ENCODE measurements at regions of chr16 and their contacts with region 1.

Region 1: DNA sequence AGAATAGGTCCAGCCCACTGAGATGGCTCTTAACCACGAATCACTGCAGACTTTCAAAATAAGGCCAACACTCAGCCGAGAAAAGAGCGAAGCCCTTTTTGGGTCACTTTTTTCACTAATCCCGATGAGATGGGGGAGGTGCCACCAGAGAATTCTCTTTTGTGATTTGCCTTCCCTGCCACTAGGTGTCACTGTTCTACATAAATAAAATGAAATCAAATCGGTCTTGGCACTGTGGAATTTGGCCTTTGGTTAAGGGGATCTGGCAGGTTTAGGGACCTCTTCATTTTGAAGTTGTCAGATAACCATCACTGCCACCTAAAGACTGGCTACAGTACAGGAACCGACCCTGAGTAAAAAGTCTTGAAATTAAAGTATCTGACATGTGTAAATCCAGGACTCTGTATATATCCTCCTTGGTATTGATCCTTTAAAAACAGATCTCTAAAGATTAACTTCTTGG is 147.0 kb downstream of the HS3ST4 start:
- DNase-seq: no peak
- ATAC-seq: no peak
- H3K4me3 ChIP-seq: no peak overlapping the region
- H3K27ac ChIP-seq: no peak overlapping the region
- H3K4me1 ChIP-seq: no peaks in the 10 kb centered on the region
- H3K27me3 ChIP-seq: no peaks in the 10 kb centered on the region
- CTCF ChIP-seq: peak; percentile 9 to 60 (median 34)
- POLR2A ChIP-seq: no peak

Region 2: GRCh38 chr16:25785361-25785760 is 53.4 kb before region 1 on chr16:
- in situ Hi-C with region 1: no loop called
- intact Hi-C with region 1: loop called (anchors 10 kb)
- DNase-seq: no peak
- ATAC-seq: no peak
- H3K4me3 ChIP-seq: no peak overlapping the region
- H3K27ac ChIP-seq: no peak overlapping the region
- H3K4me1 ChIP-seq: no peaks in the 10 kb centered on the region
- H3K27me3 ChIP-seq: no peaks in the 10 kb centered on the region
- CTCF ChIP-seq: no peak
- POLR2A ChIP-seq: no peak

Region 3: GRCh38 chr16:25875956-25876598 is 37.3 kb after region 1 on chr16:
- in situ Hi-C with region 1: no loop called
- intact Hi-C with region 1: no loop called
- DNase-seq: no peak
- ATAC-seq: no peak
- H3K4me3 ChIP-seq: no peak overlapping the region
- H3K27ac ChIP-seq: no peak overlapping the region
- H3K4me1 ChIP-seq: no peaks in the 10 kb centered on the region
- H3K27me3 ChIP-seq: no peaks in the 10 kb centered on the region
- CTCF ChIP-seq: no peak
- POLR2A ChIP-seq: no peak

Region 4: DNA sequence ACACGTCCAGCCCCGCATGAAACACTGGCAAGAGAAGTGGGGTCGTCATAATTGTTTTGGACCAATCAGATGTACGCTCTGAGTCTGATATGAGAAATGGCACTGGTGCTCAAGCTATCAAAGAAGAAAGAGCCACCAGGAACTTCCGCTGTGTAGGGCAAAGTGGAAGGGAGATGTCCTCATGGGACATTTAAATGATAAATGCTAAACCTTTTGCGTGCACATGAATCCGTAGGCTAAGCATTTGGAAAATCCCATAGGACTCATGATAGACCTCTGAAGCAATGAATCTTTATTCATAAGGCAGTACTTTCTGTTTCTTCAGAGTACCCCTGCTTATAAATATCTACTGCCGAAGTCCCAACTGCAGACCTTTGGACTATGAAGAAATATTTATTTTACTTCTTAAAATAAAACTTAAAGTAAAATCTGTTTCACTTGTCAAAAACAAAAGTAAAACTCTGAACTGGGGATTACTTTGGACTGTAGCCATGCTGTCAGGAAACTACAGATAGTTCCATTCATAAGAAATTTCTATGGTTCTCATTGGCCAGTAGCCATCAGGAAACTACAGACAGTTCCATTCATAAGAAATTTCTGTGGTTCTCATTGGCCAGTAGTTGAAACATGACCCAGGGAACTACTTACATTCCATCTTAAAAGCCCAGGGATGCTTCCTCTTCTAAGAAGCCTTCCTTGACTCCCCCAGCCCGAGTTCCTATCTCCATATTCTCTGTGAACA is 188.1 kb after region 1 on chr16:
- in situ Hi-C with region 1: no loop called
- intact Hi-C with region 1: no loop called
- DNase-seq: no peak
- ATAC-seq: no peak
- H3K4me3 ChIP-seq: no peak overlapping the region
- H3K27ac ChIP-seq: no peak overlapping the region
- H3K4me1 ChIP-seq: no peaks in the 10 kb centered on the region
- H3K27me3 ChIP-seq: no peaks in the 10 kb centered on the region
- CTCF ChIP-seq: no peak
- POLR2A ChIP-seq: no peak

Region 5: DNA sequence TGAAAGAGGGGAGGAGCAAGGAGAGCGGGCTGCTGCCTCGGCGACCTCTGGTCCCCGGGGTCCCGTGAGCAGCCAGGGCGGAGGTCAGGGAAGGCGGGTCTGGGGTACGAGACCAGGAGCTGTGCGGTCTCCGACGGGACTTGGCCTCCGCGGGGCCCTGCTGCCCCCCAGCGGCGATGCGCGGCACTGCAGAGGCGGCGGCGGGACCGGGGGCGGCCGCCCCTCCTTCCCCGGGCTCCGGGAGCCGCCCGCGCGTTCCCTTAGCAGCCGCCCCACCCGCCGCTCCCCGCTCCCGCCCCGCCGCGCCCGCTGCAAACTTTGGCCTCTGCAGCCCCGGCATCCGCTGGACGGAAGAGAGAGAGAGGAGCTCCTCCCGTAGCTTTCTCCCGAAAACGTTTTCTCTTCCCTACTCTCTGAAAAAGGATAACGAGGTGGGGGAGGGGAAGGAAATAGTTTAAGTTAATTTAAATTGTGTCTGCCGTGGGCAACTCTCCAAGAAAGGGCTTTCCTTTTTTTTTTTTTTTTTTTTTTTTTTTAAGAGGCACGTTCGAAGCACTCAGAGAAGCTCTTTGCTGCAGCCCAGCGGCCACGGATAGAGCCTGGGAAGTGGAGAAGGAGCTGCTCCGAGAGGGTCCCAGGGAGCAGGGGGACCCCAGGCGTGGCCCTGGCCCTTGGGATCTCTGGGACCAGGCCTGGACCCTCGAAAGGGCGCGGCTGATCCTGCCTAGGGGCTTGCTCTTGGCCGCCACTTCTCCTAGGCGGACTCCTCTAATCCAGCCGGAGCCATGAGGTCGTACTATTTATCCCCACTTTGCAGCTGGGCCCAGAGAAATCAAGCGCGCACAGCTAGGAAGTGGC is 1271.1 kb after region 1 on chr16:
- in situ Hi-C with region 1: loop called in 2 of 4 experiments (anchors 25 kb)
- intact Hi-C with region 1: no loop called
- DNase-seq: peak; percentile 17 to 22
- ATAC-seq: peak in 1 of 2 donors; percentile 45
- H3K4me3 ChIP-seq: peak overlapping the region in 2 of 4 donors; percentile 14 to 29
- H3K27ac ChIP-seq: peak overlapping the region in 2 of 4 donors; percentile 46 to 47
- H3K4me1 ChIP-seq: peaks cover 0 to 5% of the 10 kb centered on the region in 2 donors
- H3K27me3 ChIP-seq: peaks cover 0 to 2% (median 0%) of the 10 kb centered on the region in 3 donors
- CTCF ChIP-seq: peak; percentile 50 to 85 (median 59)
- POLR2A ChIP-seq: no peak